B cell (primary cell): ENCODE measurements at regions of chr13 and their contacts with region 1.

Region 1: DNA sequence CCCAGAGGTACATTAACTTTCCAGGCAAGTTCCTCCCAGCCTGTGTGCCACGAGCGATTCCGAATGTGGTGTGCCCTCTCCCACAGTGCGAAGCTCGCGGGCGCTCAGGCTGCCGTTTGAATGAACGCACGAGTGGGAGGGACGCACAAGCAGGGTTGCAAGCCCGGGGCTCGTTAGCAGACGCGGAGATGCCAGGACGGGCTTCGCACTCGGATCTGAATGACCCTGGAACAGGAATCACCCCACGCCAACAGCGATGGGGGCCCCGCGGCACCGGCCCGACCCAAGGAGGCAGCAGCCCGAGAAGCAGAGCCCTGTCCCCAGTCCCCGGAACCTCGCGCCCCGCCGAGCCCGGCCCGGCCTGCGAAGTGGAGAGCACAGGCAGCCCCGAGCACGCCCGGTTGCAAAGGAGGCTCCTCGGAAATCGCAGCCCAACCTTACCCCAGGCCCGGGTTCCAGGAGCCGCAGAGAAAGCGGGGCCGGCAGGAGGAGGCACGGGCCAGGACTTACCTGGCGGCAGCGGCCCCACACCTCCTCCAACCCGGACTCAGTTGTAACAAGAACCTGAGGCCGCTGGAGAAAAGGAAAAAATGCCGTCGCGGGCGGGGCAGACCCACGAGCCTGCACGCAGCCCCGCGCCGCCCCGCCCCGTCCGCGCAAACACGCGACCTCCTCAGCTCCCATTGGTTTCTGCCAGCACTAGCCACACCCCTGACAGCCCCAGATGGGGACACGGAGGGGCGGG is at the start of gene SLC25A30:
- DNase-seq: peak; percentile 92
- ATAC-seq: peak; percentile 95
- H3K4me3 ChIP-seq: peak within 1 kb of the TSS; percentile 68 to 91 (median 90)
- H3K4me3 Mint-ChIP-seq: peak within 1 kb of the TSS; percentile 97
- H3K27ac ChIP-seq: peak within 1 kb of the TSS; percentile 70 to 87
- H3K27ac Mint-ChIP-seq: peak within 1 kb of the TSS; percentile 96
- H3K4me1 ChIP-seq: peaks cover 9 to 11% of the 10 kb centered on the region in 2 donors
- H3K4me1 Mint-ChIP-seq: peaks cover 21% of the 10 kb centered on the region
- H3K27me3 ChIP-seq: no peaks in the 10 kb centered on the region
- H3K27me3 Mint-ChIP-seq: no peaks in the 10 kb centered on the region
- CTCF ChIP-seq: no peak
- total RNA-seq, gene SLC25A30: 16.9 and 25.8 TPM in 2 replicates

Region 2: GRCh38 chr13:44988973-44989817 is 428.8 kb before region 1 on chr13 and contains the starts of genes GPALPP1 and NUFIP1:
- CTCF ChIA-PET with region 1: no interaction called
- POLR2A ChIA-PET with region 1: no interaction called
- intact Hi-C with region 1: loop called (anchors 5 kb)
- DNase-seq: peak; percentile 93
- ATAC-seq: peak; percentile 97
- H3K4me3 ChIP-seq: peak within 1 kb of the TSS; percentile 92 to 99 (median 98)
- H3K4me3 Mint-ChIP-seq: peak within 1 kb of the TSS; percentile 100
- H3K27ac ChIP-seq: peak within 1 kb of the TSS; percentile 79 to 89
- H3K27ac Mint-ChIP-seq: peak within 1 kb of the TSS; percentile 98
- H3K4me1 ChIP-seq: peaks cover 13 to 24% of the 10 kb centered on the region in 2 donors
- H3K4me1 Mint-ChIP-seq: peaks cover 43% of the 10 kb centered on the region
- H3K27me3 ChIP-seq: no peaks in the 10 kb centered on the region
- H3K27me3 Mint-ChIP-seq: no peaks in the 10 kb centered on the region
- CTCF ChIP-seq: no peak
- total RNA-seq, gene GPALPP1: 41.8 and 45.6 TPM in 2 replicates
- total RNA-seq, gene NUFIP1: 4.7 and 5.8 TPM in 2 replicates

Region 3: DNA sequence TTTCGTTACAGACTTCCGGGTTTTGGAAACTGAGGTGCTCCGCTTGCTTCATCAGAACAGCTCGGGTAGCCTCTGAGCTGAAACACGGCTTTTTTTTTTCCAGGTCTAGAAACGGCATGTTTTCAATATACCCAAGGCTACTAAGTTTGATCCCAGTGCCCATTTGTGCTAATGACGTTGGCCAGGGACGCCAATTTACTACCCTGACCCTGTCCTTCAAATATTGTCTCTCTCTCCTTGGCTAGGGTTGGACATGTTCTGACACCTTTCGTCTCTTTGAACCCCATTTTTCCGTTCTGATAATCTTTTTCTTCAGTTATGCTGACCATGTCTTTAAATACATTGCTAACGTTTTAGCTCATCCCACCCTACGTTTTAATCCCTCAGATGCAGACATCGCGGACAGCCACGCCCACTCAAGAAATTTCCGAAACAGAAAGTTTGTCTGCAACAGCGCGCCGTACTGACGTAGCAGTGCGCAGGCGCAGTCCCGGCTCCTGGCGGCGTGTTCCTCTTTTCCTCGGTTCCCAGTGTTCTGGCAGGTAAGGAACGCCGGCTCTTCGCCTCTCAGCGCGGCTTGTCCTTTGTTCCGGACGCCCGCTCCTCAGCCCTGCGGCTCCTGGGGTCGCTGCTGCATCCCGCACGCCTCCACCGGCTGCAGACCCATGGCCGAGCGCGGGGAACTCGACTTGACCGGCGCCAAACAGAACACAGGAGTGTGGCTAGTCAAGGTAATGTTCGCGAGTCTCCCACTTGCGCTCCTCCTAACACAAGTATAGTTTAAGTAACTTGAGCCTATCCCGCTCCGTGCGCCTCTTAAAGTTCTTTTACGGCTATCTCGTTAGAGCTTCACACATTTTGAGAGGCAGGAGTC is 297.7 kb before region 1 on chr13 and contains the start of gene GTF2F2:
- CTCF ChIA-PET with region 1: no interaction called
- POLR2A ChIA-PET with region 1: no interaction called
- intact Hi-C with region 1: loop called (anchors 5 kb)
- DNase-seq: peak; percentile 94
- ATAC-seq: peak; percentile 81
- H3K4me3 ChIP-seq: peak within 1 kb of the TSS; percentile 68 to 100 (median 92)
- H3K4me3 Mint-ChIP-seq: no peak within 1 kb of the TSS
- H3K27ac ChIP-seq: peak within 1 kb of the TSS; percentile 66 to 93
- H3K27ac Mint-ChIP-seq: no peak within 1 kb of the TSS
- H3K4me1 ChIP-seq: peaks cover 20 to 21% of the 10 kb centered on the region in 2 donors
- H3K4me1 Mint-ChIP-seq: peaks cover 7% of the 10 kb centered on the region
- H3K27me3 ChIP-seq: no peaks in the 10 kb centered on the region
- H3K27me3 Mint-ChIP-seq: no peaks in the 10 kb centered on the region
- CTCF ChIP-seq: no peak
- total RNA-seq, gene GTF2F2: 19.6 and 23.6 TPM in 2 replicates

Region 4: DNA sequence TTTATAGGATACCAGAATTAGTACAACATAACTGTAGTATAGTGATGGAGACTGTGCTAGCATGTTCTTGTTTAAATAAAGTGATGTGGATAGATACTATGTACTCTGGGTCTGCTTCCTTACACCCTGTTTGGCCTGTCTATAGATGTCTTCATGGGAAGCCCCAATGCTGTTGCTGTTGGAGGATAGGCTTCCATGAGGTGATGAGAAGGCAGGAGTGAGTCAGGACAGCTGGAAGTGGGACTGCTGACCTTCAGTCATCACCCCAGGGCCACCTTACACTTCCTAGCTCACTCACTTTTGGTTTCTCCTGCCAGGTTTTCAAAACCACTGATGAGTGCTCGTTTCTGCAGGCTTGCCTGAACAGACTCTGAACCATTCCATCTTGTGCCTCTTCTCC is 221.3 kb before region 1 on chr13:
- CTCF ChIA-PET with region 1: no interaction called
- POLR2A ChIA-PET with region 1: no interaction called
- intact Hi-C with region 1: no loop called
- DNase-seq: no peak
- ATAC-seq: no peak
- H3K4me3 ChIP-seq: no peak overlapping the region
- H3K4me3 Mint-ChIP-seq: no peak overlapping the region
- H3K27ac ChIP-seq: no peak overlapping the region
- H3K27ac Mint-ChIP-seq: peak overlapping the region; percentile 17
- H3K4me1 ChIP-seq: peaks cover 7 to 9% of the 10 kb centered on the region in 2 donors
- H3K4me1 Mint-ChIP-seq: peaks cover 22% of the 10 kb centered on the region
- H3K27me3 ChIP-seq: no peaks in the 10 kb centered on the region
- H3K27me3 Mint-ChIP-seq: no peaks in the 10 kb centered on the region
- CTCF ChIP-seq: no peak

Region 5: DNA sequence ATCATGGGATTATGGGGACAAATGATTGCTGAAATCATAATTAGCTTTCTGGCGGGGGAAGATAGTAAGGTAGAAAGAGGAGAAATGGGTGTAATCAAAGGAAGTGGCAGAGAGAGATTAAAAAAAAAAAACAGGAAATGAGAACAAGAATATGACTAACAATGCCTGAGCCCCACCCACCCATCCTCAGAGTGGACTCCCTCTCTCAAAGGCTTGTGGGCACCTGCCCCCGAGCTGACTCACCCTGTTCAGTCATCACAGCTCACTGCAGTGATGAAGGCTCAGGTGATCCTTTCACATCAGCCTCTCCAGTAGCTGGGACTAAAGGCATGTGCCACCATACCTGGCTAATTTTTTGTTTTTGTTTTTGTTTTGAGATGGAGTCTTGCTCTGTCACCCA is 50.6 kb before region 1 on chr13:
- CTCF ChIA-PET with region 1: interaction called, 4 read pairs
- POLR2A ChIA-PET with region 1: interaction called, 6 read pairs
- intact Hi-C with region 1: loop called (anchors 1 kb)
- DNase-seq: peak; percentile 81
- ATAC-seq: peak; percentile 99
- H3K4me3 ChIP-seq: peak overlapping the region in 1 of 5 experiments; percentile 1
- H3K4me3 Mint-ChIP-seq: peak overlapping the region; percentile 59
- H3K27ac ChIP-seq: peak overlapping the region in 1 of 2 donors; percentile 39
- H3K27ac Mint-ChIP-seq: peak overlapping the region; percentile 83
- H3K4me1 ChIP-seq: peaks cover 13 to 24% of the 10 kb centered on the region in 2 donors
- H3K4me1 Mint-ChIP-seq: peaks cover 32% of the 10 kb centered on the region
- H3K27me3 ChIP-seq: no peaks in the 10 kb centered on the region
- H3K27me3 Mint-ChIP-seq: no peaks in the 10 kb centered on the region
- CTCF ChIP-seq: no peak

Region 6: DNA sequence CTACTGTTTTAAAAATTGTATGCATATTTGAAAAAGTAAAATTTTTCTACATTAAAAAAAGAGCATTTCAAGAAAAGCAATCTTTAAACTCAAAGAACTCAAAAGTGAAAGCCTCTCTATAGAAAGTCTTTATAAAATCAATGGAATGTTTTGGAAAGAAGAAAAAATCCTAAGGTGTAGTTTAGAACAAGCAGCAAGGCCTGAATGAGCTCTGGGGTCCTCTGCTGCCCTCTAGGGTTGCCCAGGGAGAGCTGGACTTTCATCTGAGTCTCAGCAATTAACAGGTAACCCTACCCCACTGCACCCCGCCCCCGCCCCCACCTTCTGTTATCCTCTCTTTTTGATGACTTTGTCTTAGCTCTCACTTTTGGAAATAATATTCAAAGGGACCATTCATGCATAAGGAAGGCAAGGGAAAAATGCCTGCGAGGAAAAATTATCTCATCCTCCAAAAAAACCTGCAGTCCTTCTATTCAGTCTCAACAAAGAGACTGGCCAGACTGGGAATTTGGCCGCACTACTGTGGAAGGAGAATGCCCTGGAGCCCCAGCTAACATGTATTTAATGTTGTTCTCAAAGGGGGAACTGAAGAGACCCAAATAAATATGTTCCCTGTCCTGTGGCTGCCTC is 23.9 kb before region 1 on chr13:
- CTCF ChIA-PET with region 1: interaction called, 27 read pairs
- POLR2A ChIA-PET with region 1: no interaction called
- intact Hi-C with region 1: no loop called
- DNase-seq: peak; percentile 49
- ATAC-seq: peak; percentile 47
- H3K4me3 ChIP-seq: no peak overlapping the region
- H3K4me3 Mint-ChIP-seq: no peak overlapping the region
- H3K27ac ChIP-seq: no peak overlapping the region
- H3K27ac Mint-ChIP-seq: no peak overlapping the region
- H3K4me1 ChIP-seq: no peaks in the 10 kb centered on the region
- H3K4me1 Mint-ChIP-seq: peaks cover 6% of the 10 kb centered on the region
- H3K27me3 ChIP-seq: no peaks in the 10 kb centered on the region
- H3K27me3 Mint-ChIP-seq: no peaks in the 10 kb centered on the region
- CTCF ChIP-seq: peak; percentile 63

Region 7: DNA sequence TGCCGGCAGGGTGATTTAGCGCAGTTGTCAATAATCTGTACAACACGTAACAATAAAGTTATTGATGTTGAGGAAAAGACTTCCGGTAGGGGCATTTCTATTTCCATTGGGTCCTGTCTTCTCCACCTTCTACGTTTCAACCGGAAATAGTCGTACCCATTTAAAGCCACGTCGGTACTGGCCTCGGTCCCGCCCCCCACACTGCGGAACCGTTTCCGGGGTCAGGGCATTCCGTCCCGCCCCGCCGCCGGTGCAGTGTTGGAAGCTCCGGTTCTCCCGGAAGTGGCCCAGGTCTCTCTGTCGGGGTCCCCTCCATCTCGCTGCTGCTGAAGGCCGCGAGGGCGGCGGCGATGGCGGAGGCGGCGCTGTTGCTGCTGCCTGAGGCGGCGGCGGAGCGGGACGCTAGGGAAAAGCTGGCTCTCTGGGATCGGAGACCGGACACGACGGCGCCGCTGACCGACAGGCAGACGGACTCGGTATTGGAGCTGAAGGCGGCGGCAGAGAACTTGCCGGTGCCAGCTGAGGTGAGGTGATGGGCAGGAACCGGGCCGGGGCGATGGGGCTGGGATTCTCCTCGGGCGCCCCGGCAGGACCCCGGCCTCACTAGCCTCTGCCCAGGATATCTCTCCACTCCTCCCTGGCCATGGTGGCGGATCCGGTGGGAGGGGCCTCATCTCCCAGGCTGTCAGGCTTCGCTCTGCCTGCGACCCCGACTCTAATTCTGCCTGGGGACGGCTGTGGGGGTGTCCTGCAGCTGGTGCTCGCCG is 46.9 kb after region 1 on chr13 and contains the start of gene COG3:
- CTCF ChIA-PET with region 1: interaction called, 13 read pairs
- POLR2A ChIA-PET with region 1: interaction called, 12 read pairs
- intact Hi-C with region 1: loop called (anchors 1 kb)
- DNase-seq: peak; percentile 96
- ATAC-seq: peak; percentile 96
- H3K4me3 ChIP-seq: peak within 1 kb of the TSS; percentile 74 to 96 (median 88)
- H3K4me3 Mint-ChIP-seq: peak within 1 kb of the TSS; percentile 91
- H3K27ac ChIP-seq: peak within 1 kb of the TSS; percentile 78 to 83
- H3K27ac Mint-ChIP-seq: peak within 1 kb of the TSS; percentile 91
- H3K4me1 ChIP-seq: peaks cover 12 to 21% of the 10 kb centered on the region in 2 donors
- H3K4me1 Mint-ChIP-seq: peaks cover 38% of the 10 kb centered on the region
- H3K27me3 ChIP-seq: no peaks in the 10 kb centered on the region
- H3K27me3 Mint-ChIP-seq: no peaks in the 10 kb centered on the region
- CTCF ChIP-seq: peak; percentile 56
- total RNA-seq, gene COG3: 37.3 and 41.5 TPM in 2 replicates